Sciatic nerve (tissue), 2 donors: ENCODE measurements at regions of chr22 and their contacts with region 1.

Region 1: DNA sequence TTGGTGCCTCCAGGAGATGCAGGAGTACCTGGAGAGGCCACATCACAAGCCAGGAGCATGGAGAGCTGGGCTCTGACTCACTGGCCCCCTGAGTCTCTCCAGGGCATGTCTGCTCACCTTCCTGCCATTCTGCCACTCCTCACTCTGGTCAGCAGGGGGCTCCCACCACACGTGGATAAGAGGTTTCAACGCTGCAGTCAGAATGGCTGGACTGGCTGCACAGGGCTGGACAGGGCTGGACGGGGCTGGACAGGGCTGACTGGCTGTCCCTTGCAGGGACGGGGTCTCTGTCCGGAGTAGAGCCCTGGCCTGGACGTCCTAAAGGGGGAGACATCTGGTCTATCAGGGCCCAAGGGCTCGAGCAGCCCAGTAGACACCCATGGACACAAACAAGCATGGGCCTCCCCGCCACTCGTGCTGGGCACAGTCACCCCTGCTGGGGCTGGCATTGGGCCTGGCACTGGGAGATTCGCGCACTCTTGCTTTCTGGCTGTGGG is 34.6 kb downstream of the CYTH4 start:
- DNase-seq: peak; percentile 86
- ATAC-seq: peak; percentile 90

Region 2: GRCh38 chr22:37330200-37331033 is 13.5 kb after region 1 on chr22:
- intact Hi-C with region 1: no loop called
- DNase-seq: no peak
- ATAC-seq: no peak

Region 3: GRCh38 chr22:37457093-37457893 is 140.4 kb after region 1 on chr22:
- intact Hi-C with region 1: loop called (anchors 5 kb)
- DNase-seq: peak; percentile 83
- ATAC-seq: peak; percentile 85